ENCODE measurements at regions of chr1 and their contacts with region 1.

Region 1: DNA sequence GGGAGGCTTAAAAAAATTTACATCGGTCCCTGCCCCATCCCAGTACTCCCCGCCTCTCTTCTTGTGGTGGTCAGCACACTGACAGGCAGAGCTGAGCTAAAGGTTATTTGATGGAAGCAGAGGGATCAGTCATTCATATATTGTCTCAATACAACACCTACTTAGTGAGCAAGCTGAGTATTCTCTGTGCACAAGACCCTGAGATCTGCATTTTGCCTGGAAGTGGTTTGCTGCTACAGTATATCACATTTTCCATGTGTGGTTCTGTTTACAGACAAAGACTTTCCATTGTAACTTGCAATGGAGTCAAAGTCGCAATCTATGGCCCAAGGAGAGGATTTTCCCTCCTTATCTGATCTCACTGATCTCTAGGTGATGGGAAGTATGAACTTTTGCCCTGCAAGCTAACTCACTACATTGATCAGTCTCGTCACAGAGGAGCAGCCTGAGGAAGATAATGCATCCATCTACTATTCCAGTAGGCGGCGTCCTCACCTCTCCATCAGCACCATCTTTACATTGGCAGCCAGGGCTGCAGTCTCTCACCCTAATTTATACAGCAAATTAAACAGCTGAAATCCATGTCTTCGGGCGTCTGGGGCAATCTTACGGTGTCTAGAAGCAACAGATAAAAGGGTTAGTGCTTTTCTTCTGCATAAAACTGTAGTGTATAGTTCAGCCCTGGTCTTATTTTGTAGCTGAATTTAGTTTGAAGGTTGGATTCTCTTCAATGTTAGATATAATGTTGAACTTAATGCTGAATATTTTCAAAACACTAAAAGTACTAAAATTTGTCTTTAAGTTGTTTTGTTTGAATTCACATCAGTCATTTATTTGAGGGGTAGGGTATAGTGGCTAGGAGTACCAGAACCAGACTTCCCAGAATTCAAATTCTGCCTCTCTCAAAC is 3.2 kb upstream of the TRAF5 start:
- DNase-seq: peak; percentile 66 to 72
- ATAC-seq: peak; percentile 80 to 87
- H3K4me3 ChIP-seq: no peak overlapping the region
- H3K27ac ChIP-seq: no peak overlapping the region
- H3K4me1 ChIP-seq: peaks cover 11% of the 10 kb centered on the region
- CTCF ChIP-seq: peak; percentile 92
- EP300 ChIP-seq: no peak
- POLR2A ChIP-seq: no peak
- RAD21 ChIP-seq: peak; percentile 82 to 90

Region 2: GRCh38 chr1:211309617-211310016 is 13.8 kb before region 1 on chr1:
- CTCF ChIA-PET with region 1: interaction called, 13 read pairs
- POLR2A ChIA-PET with region 1: interaction called, 3 read pairs
- DNase-seq: no peak
- ATAC-seq: no peak
- H3K4me3 ChIP-seq: no peak overlapping the region
- H3K27ac ChIP-seq: no peak overlapping the region
- H3K4me1 ChIP-seq: no peaks in the 10 kb centered on the region
- CTCF ChIP-seq: no peak
- EP300 ChIP-seq: no peak
- POLR2A ChIP-seq: no peak
- RAD21 ChIP-seq: no peak

Region 3: DNA sequence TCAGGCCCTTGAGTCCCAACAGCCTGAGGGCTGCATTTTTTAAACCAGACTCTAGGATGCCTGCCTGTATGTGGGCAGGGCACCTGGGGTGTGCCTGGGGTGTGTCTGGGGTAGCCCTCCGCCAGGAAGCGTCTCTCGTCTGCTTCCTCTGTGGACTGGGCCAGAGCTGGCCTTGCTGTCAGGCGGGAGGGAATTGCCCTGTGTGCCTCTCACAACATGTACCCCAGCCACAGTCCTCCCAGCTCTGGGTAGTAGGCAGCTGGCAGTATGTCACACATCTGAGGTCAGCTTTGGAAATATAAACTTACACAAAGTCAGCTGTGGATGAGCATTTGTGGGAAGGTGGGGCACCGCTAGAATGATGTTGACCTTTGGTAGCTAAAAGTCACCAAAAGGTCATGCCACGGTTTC is 16.2 kb after region 1 on chr1:
- CTCF ChIA-PET with region 1: interaction called, 22 read pairs
- POLR2A ChIA-PET with region 1: no interaction called
- DNase-seq: no peak
- ATAC-seq: peak; percentile 17 to 28; a peak in 2 of 6 replicates
- H3K4me3 ChIP-seq: no peak overlapping the region
- H3K27ac ChIP-seq: no peak overlapping the region
- H3K4me1 ChIP-seq: peaks cover 15% of the 10 kb centered on the region
- CTCF ChIP-seq: no peak
- EP300 ChIP-seq: no peak
- POLR2A ChIP-seq: no peak
- RAD21 ChIP-seq: no peak

Region 4: GRCh38 chr1:211347077-211347844 is 23.9 kb after region 1 on chr1:
- CTCF ChIA-PET with region 1: interaction called, 11 read pairs
- POLR2A ChIA-PET with region 1: no interaction called
- DNase-seq: no peak
- ATAC-seq: no peak
- H3K4me3 ChIP-seq: no peak overlapping the region
- H3K27ac ChIP-seq: no peak overlapping the region
- H3K4me1 ChIP-seq: no peaks in the 10 kb centered on the region
- CTCF ChIP-seq: no peak
- EP300 ChIP-seq: no peak
- POLR2A ChIP-seq: no peak
- RAD21 ChIP-seq: no peak

Region 5: DNA sequence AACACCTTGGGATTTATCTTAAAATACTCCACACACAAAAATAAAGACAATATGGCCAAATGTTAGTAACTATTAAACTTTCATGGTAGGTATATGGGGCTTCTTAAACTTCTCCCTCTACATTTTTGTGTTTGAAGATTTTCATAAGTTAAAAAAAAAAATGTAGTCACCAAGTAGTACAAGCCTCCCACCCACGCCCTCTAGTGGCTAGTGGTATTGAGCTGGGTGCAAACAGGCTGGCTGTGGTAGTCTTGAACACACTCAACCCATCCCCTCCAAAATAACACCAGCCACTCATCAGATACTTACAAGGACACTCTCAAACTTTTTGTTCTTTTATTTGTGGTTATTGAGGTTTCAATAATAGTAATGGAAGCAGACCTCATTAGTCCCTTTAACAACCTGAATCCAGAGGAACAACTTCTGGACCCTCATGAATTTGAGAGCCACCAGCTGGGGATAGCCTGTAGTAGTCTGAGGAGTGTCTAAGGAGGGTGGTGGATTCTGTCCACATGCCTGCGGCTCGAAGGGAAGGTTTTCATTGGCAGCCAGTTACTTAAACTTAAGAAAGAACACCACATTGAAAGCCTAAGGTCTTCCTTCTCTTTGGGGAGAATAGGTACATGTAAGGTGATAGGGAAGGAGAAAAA is 152.9 kb after region 1 on chr1:
- CTCF ChIA-PET with region 1: interaction called, 15 read pairs
- POLR2A ChIA-PET with region 1: no interaction called
- DNase-seq: peak; percentile 67 to 72
- ATAC-seq: peak; percentile 83 to 94; a peak in 5 of 6 replicates
- H3K4me3 ChIP-seq: no peak overlapping the region
- H3K27ac ChIP-seq: no peak overlapping the region
- H3K4me1 ChIP-seq: 0 out of 3 replicates have a peak, but pooled peaks cover 7% of the 10 kb centered on the region
- CTCF ChIP-seq: peak; percentile 90
- EP300 ChIP-seq: no peak
- POLR2A ChIP-seq: no peak
- RAD21 ChIP-seq: peak; percentile 53 to 61

Region 6: DNA sequence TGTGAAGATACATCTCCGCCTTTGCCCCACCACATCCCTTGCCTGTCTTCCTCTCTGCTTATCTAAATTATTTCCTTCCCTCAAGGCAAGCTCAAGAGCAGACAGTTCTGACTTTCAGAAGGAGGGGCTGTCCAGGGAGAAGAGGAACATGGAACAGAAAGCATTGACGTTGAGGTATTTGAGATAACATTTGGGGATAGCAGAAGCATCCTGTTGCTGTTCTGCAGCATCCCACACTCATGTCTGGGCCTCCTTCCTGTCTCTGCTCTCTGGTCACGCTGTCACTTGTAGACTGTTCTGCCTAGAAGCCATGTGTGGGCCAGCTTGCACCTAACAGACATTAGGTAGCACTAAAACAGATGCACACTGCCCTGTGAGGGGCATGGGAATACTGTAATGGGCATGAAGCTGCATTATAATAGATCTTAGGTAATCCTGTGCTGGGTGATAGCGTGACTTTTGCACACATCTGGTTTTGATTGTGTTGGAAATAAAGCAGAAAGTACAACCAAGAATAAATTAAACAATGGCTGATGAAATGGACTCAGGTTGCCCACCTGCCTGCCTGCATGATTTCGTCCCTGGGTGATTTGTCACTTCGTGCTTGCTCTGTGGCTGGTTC is 169.2 kb after region 1 on chr1:
- CTCF ChIA-PET with region 1: interaction called, 12 read pairs
- POLR2A ChIA-PET with region 1: no interaction called
- DNase-seq: no peak
- ATAC-seq: no peak
- H3K4me3 ChIP-seq: no peak overlapping the region
- H3K27ac ChIP-seq: no peak overlapping the region
- H3K4me1 ChIP-seq: no peaks in the 10 kb centered on the region
- CTCF ChIP-seq: no peak
- EP300 ChIP-seq: no peak
- POLR2A ChIP-seq: no peak
- RAD21 ChIP-seq: no peak

Measured in A549 (cell line).